B cell (primary cell): ENCODE measurements at regions of chr2 and their contacts with region 1.

Region 1: GRCh38 chr2:230068016-230068650 is 591 bp downstream of the SLC16A14 start:
- DNase-seq: peak; percentile 75
- ATAC-seq: peak; percentile 34
- H3K4me3 ChIP-seq: peak overlapping the region; percentile 47 to 76 (median 67)
- H3K4me3 Mint-ChIP-seq: peak overlapping the region; percentile 96
- H3K27ac ChIP-seq: no peak overlapping the region
- H3K27ac Mint-ChIP-seq: peak overlapping the region; percentile 83
- H3K4me1 ChIP-seq: peaks cover 8 to 18% of the 10 kb centered on the region in 2 donors
- H3K4me1 Mint-ChIP-seq: peaks cover 20% of the 10 kb centered on the region
- H3K27me3 ChIP-seq: peaks cover 0 to 9% (median 2%) of the 10 kb centered on the region in 4 experiments
- H3K27me3 Mint-ChIP-seq: peaks cover 13% of the 10 kb centered on the region
- CTCF ChIP-seq: no peak

Region 2: DNA sequence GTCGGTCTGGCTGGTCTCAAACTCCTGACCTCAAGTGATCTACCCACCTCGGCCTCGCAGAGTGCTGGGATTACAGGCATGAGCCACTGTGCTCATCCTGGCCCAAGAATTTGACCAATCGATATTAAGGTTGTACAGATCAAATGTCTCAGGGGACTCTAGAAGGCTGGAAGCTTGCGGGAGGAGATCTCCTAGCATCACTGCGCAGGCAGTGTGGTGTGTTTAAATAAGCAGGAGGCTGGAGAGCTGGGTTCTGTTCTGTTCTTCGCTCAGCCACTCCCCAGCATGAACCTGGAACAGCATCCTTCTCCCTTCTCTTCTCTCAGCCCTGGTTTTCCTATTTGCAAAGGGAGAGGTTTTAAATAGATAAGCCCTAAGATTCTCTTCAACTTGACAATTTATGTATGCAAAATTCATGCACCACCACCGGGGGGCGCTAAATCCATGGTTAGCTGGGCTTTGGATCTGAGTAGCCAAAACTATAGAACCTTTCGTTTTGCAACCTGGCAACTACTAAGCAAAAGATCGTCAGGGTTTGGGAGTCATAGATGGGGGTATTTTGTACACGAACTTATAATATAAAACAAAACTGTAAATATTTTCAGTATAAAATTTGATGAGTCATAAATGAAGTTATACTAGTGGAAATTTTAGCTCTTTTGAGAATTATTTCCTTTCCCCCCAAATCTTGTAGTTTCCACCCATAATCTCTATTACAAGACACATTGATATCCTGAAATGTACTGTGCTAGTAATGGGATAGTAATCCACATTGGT is 60.0 kb before region 1 on chr2:
- CTCF ChIA-PET with region 1: interaction called, 9 read pairs
- POLR2A ChIA-PET with region 1: no interaction called
- intact Hi-C with region 1: loop called (anchors 2 kb)
- DNase-seq: peak; percentile 75
- ATAC-seq: peak; percentile 66
- H3K4me3 ChIP-seq: no peak overlapping the region
- H3K4me3 Mint-ChIP-seq: peak overlapping the region; percentile 56
- H3K27ac ChIP-seq: no peak overlapping the region
- H3K27ac Mint-ChIP-seq: no peak overlapping the region
- H3K4me1 ChIP-seq: no peaks in the 10 kb centered on the region
- H3K4me1 Mint-ChIP-seq: peaks cover 5% of the 10 kb centered on the region
- H3K27me3 ChIP-seq: no peaks in the 10 kb centered on the region
- H3K27me3 Mint-ChIP-seq: no peaks in the 10 kb centered on the region
- CTCF ChIP-seq: peak; percentile 95

Region 3: GRCh38 chr2:230018153-230018552 is 50.0 kb before region 1 on chr2:
- CTCF ChIA-PET with region 1: no interaction called
- POLR2A ChIA-PET with region 1: no interaction called
- intact Hi-C with region 1: no loop called
- DNase-seq: no peak
- ATAC-seq: no peak
- H3K4me3 ChIP-seq: no peak overlapping the region
- H3K4me3 Mint-ChIP-seq: no peak overlapping the region
- H3K27ac ChIP-seq: no peak overlapping the region
- H3K27ac Mint-ChIP-seq: no peak overlapping the region
- H3K4me1 ChIP-seq: no peaks in the 10 kb centered on the region
- H3K4me1 Mint-ChIP-seq: no peaks in the 10 kb centered on the region
- H3K27me3 ChIP-seq: peaks cover 0 to 2% (median 0%) of the 10 kb centered on the region in 4 experiments
- H3K27me3 Mint-ChIP-seq: no peaks in the 10 kb centered on the region
- CTCF ChIP-seq: no peak

Region 4: GRCh38 chr2:230160112-230160660 is 92.1 kb after region 1 on chr2:
- CTCF ChIA-PET with region 1: interaction called, 42 read pairs
- POLR2A ChIA-PET with region 1: no interaction called
- intact Hi-C with region 1: loop called (anchors 1 kb)
- DNase-seq: peak; percentile 71
- ATAC-seq: peak; percentile 63
- H3K4me3 ChIP-seq: no peak overlapping the region
- H3K4me3 Mint-ChIP-seq: no peak overlapping the region
- H3K27ac ChIP-seq: no peak overlapping the region
- H3K27ac Mint-ChIP-seq: peak overlapping the region; percentile 15
- H3K4me1 ChIP-seq: peaks cover 0 to 15% of the 10 kb centered on the region in 2 donors
- H3K4me1 Mint-ChIP-seq: peaks cover 21% of the 10 kb centered on the region
- H3K27me3 ChIP-seq: no peaks in the 10 kb centered on the region
- H3K27me3 Mint-ChIP-seq: no peaks in the 10 kb centered on the region
- CTCF ChIP-seq: peak; percentile 89

Region 5: GRCh38 chr2:230411570-230412370 is 343.6 kb after region 1 on chr2:
- CTCF ChIA-PET with region 1: no interaction called
- POLR2A ChIA-PET with region 1: no interaction called
- intact Hi-C with region 1: loop called (anchors 5 kb)
- DNase-seq: peak; percentile 81
- ATAC-seq: peak; percentile 62
- H3K4me3 ChIP-seq: peak overlapping the region; percentile 69 to 92 (median 88)
- H3K4me3 Mint-ChIP-seq: peak overlapping the region; percentile 98
- H3K27ac ChIP-seq: peak overlapping the region; percentile 88 to 92
- H3K27ac Mint-ChIP-seq: peak overlapping the region; percentile 99
- H3K4me1 ChIP-seq: peaks cover 54 to 63% of the 10 kb centered on the region in 2 donors
- H3K4me1 Mint-ChIP-seq: peaks cover 72% of the 10 kb centered on the region
- H3K27me3 ChIP-seq: no peaks in the 10 kb centered on the region
- H3K27me3 Mint-ChIP-seq: no peaks in the 10 kb centered on the region
- CTCF ChIP-seq: no peak